Posterior vena cava (tissue), 2 donors: ENCODE measurements at regions of chr18 and their contacts with region 1.

Region 1: GRCh38 chr18:78906066-78906465 is 73.6 kb upstream of the SALL3 start:
- DNase-seq: no peak

Region 2: GRCh38 chr18:77016936-77017335 is 1889.1 kb before region 1 on chr18:
- intact Hi-C with region 1: loop called in 1 of 2 experiments (anchors 5 kb)
- DNase-seq: no peak